ENCODE measurements at regions of chr4 and their contacts with region 1.

Region 1: DNA sequence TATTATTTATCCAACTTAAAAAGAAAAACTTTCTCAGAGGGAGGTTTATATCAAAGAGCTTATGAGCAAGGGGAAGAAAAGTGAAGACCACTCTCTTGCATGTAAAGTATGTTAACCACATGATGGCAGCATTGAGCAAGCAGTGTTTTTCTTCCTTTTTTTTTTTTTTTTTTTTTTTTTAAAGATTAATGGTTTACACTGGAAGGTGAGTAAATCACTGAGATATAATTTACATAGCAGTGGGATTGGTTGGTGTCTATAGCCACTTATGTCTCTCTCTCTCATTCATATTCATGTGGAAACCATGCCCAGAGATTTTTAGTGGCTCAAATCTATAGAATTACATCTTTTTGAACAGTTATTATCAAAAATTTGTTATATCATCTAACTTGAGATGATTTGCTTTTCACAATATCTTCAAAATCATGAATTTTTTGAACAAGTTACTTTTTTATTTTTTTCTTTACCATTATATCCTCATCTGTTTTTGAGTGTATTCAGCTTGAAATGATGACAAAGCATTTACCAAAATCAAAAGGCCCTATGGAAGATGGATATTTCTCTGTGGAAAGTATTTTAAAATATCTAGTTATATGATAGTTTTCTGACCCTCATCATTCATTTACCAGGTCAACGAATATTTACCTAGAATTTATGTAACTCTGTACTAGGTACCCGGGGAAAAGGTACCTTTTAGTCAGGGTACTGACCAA is 31.6 kb downstream of the MTHFD2L start:
- DNase-seq: peak; percentile 19
- CTCF ChIP-seq: peak; percentile 33

Region 2: DNA sequence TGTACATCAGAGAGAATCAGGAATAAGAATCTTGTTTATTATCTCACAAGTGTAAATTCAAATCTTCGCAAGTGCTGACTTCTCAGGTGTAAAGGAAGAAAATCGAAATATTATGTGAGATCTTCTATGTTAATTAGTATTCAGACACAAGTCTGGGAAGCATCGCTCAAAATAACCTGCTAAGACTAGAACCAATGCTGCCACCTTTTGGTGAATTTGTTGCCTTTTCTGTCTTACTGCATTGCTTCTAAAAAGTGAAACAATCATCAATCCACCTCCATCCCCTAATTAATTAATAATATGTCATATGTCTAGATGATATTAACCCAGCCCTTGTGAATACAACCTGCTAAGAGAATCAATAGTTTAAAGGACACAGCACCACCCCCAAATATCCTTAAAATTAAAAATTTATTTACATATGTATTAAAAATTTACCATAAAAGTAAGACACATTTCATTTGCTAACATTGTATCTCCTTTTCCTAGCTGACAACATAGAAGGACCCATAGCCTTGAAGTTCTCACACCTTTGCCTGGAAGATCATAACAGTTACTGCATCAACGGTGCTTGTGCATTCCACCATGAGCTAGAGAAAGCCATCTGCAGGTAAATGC is 122.3 kb after region 1 on chr4:
- in situ Hi-C with region 1: loop called (anchors 10 kb)
- DNase-seq: peak; percentile 11
- CTCF ChIP-seq: peak; percentile 46

Region 3: GRCh38 chr4:74671080-74671698 is 481.7 kb after region 1 on chr4:
- in situ Hi-C with region 1: loop called (anchors 25 kb)
- DNase-seq: no peak
- CTCF ChIP-seq: peak; percentile 27

Region 4: GRCh38 chr4:74814052-74814451 is 624.6 kb after region 1 on chr4:
- in situ Hi-C with region 1: no loop called
- DNase-seq: no peak
- CTCF ChIP-seq: no peak

Measured in GM13976 (cell line).